Right lobe of liver (tissue), 6 donors: ENCODE measurements at regions of chr1 and their contacts with region 1.

Region 1: GRCh38 chr1:205668951-205669340 is 11.4 kb downstream of the SLC45A3 start:
- DNase-seq: peak; percentile 40 to 80 (median 66)
- ATAC-seq: peak in 3 of 4 donors; percentile 6 to 48 (median 23)
- H3K4me3 ChIP-seq: peak overlapping the region in 1 of 3 donors; percentile 79
- H3K27ac ChIP-seq: peak overlapping the region in 2 of 3 donors; percentile 6 to 77
- H3K4me1 ChIP-seq: peaks cover 0 to 85% (median 39%) of the 10 kb centered on the region in 4 donors
- H3K27me3 ChIP-seq: no peaks in the 10 kb centered on the region
- CTCF ChIP-seq: peak in 2 of 4 donors; percentile 17 to 33
- POLR2A ChIP-seq: no peak

Region 2: GRCh38 chr1:205591522-205592351 is 77.2 kb before region 1 on chr1:
- intact Hi-C with region 1: no loop called
- DNase-seq: peak; percentile 83 to 85 (median 85)
- ATAC-seq: peak; percentile 97 to 99 (median 98)
- H3K4me3 ChIP-seq: peak overlapping the region; percentile 28 to 57 (median 56)
- H3K27ac ChIP-seq: peak overlapping the region in 1 of 3 donors; percentile 41
- H3K4me1 ChIP-seq: no peaks in the 10 kb centered on the region
- H3K27me3 ChIP-seq: no peaks in the 10 kb centered on the region
- CTCF ChIP-seq: peak; percentile 95 to 99 (median 98)
- POLR2A ChIP-seq: no peak

Region 3: DNA sequence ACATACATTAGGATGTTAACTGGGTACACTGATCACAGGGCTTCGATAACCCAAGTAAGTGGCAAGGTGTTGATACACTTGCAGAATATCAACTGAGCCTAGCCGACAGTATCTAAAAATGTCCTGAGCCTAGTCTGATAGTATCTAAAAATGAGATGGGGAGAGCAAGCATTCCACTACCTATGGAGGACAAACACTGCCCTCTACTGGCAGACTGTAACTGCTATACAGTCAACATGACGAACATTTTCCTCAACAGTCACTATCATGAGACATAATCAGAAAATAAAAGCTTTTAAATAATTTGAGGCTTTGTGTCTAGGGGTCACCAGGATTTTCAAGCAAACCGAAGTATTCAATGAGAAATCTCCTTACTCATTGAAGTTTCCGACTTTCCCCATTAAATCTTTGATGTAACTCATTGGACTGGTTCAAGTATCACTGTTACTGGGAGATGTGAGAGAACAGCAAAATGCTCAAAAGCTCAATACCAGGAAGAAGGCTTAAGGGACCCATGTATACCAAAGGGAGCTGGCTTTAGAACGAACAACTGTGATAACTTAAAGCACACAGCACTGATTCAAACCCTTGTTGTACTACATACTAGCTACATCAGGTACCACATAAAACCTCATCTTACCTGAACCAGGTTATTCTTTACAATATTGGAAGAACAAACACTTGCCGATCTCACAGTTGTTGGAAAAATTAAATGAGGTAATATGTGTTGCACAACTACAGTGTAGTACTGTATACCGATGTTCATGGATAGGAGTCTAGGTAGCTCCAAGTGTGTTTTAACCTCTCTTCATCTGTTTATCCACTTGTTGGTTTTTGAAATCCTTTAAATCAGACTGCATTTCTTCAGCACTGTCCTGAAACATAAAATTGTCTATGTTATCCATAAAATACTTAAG is 42.4 kb after region 1 on chr1:
- intact Hi-C with region 1: loop called (anchors 5 to 10 kb)
- DNase-seq: peak in 1 of 3 donors; percentile 73
- ATAC-seq: peak; percentile 60 to 81 (median 70)
- H3K4me3 ChIP-seq: no peak overlapping the region
- H3K27ac ChIP-seq: peak overlapping the region; percentile 73 to 79 (median 77)
- H3K4me1 ChIP-seq: peaks cover 0 to 81% (median 36%) of the 10 kb centered on the region in 4 donors
- H3K27me3 ChIP-seq: no peaks in the 10 kb centered on the region
- CTCF ChIP-seq: peak; percentile 85 to 93 (median 90)
- POLR2A ChIP-seq: no peak

Region 4: GRCh38 chr1:205983925-205984725 is 315.2 kb after region 1 on chr1:
- intact Hi-C with region 1: loop called in 1 of 2 experiments (anchors 10 kb)
- DNase-seq: peak; percentile 65 to 71 (median 69)
- ATAC-seq: peak; percentile 84 to 91 (median 88)
- H3K4me3 ChIP-seq: no peak overlapping the region
- H3K27ac ChIP-seq: no peak overlapping the region
- H3K4me1 ChIP-seq: peaks cover 0 to 8% (median 0%) of the 10 kb centered on the region in 4 donors
- H3K27me3 ChIP-seq: no peaks in the 10 kb centered on the region
- CTCF ChIP-seq: peak; percentile 63 to 82 (median 73)
- POLR2A ChIP-seq: no peak